CD4-positive, alpha-beta memory T cell (primary cell): ENCODE measurements at regions of chr11 and their contacts with region 1.

Region 1: DNA sequence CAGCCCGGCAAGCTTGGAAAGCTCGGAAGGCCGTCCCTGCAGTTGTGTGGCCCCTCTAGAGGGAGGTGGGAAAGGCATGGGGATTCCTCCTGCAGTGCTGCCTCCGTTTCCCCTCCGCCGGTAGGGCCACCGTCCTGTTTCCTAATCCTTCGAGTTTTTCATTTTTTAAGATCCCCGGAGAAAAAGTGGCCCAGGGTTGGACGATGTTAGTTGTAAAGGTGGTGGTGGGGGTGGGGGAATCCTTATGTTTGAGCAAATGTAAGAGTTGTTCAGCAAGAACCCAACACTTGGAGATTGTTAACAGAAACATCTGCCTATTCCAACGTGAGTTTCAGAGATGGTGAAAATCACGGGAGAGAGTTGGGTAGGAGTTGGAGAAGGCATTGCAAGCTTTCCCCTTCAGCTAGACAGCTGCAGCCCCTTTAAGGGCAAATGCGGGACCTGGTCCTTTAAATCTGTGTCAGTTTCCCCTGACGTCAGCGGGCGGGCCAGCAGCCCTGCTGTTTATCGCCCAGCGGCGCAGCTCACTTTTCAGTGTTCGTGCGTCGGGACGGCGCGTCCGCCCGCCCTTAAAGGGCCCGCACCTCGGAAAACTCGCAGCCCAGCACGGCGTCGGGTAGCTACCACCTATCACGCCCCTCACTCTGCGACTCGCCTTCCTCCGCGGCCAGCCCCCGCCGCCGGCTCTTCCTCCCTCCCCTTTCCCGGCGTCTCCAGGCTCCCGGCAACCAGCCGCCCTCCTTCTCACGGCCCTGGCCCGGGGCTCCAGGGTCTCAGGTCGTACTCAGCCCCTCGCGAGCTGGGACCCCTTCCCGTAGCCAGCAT is at the start of gene SIDT2:
- DNase-seq: peak; percentile 85 to 90 (median 86)
- H3K4me3 ChIP-seq: peak within 1 kb of the TSS; percentile 76 to 80
- H3K4me3 Mint-ChIP-seq: peak within 1 kb of the TSS; percentile 94 to 99 (median 94)
- H3K27ac ChIP-seq: peak within 1 kb of the TSS; percentile 73
- H3K27ac Mint-ChIP-seq: peak within 1 kb of the TSS; percentile 93 to 98 (median 97)
- H3K4me1 ChIP-seq: peaks cover 30% of the 10 kb centered on the region
- H3K4me1 Mint-ChIP-seq: peaks cover 21 to 45% (median 34%) of the 10 kb centered on the region in 4 donors
- H3K27me3 ChIP-seq: no peaks in the 10 kb centered on the region
- H3K27me3 Mint-ChIP-seq: no peaks in the 10 kb centered on the region
- total RNA-seq, gene SIDT2: 60.2 to 67.3 TPM

Region 2: GRCh38 chr11:116853461-116854073 is 324.9 kb before region 1 on chr11:
- CTCF ChIA-PET with region 1: no interaction called
- POLR2A ChIA-PET with region 1: interaction called, 12 read pairs
- intact Hi-C with region 1: no loop called
- DNase-seq: peak; percentile 81 to 91 (median 85)
- H3K4me3 ChIP-seq: peak overlapping the region; percentile 8 to 38
- H3K4me3 Mint-ChIP-seq: peak overlapping the region; percentile 53 to 90 (median 77)
- H3K27ac ChIP-seq: peak overlapping the region; percentile 52
- H3K27ac Mint-ChIP-seq: peak overlapping the region; percentile 83 to 98 (median 95)
- H3K4me1 ChIP-seq: peaks cover 81% of the 10 kb centered on the region
- H3K4me1 Mint-ChIP-seq: peaks cover 67 to 84% (median 74%) of the 10 kb centered on the region in 4 donors
- H3K27me3 ChIP-seq: no peaks in the 10 kb centered on the region
- H3K27me3 Mint-ChIP-seq: no peaks in the 10 kb centered on the region

Region 3: GRCh38 chr11:117127171-117127901 is 51.1 kb before region 1 on chr11:
- CTCF ChIA-PET with region 1: no interaction called
- POLR2A ChIA-PET with region 1: no interaction called
- intact Hi-C with region 1: no loop called
- DNase-seq: no peak
- H3K4me3 ChIP-seq: no peak overlapping the region
- H3K4me3 Mint-ChIP-seq: no peak overlapping the region
- H3K27ac ChIP-seq: no peak overlapping the region
- H3K27ac Mint-ChIP-seq: no peak overlapping the region
- H3K4me1 ChIP-seq: no peaks in the 10 kb centered on the region
- H3K4me1 Mint-ChIP-seq: no peaks in the 10 kb centered on the region
- H3K27me3 ChIP-seq: no peaks in the 10 kb centered on the region
- H3K27me3 Mint-ChIP-seq: peaks cover 0 to 2% of the 10 kb centered on the region in 2 donors

Region 4: DNA sequence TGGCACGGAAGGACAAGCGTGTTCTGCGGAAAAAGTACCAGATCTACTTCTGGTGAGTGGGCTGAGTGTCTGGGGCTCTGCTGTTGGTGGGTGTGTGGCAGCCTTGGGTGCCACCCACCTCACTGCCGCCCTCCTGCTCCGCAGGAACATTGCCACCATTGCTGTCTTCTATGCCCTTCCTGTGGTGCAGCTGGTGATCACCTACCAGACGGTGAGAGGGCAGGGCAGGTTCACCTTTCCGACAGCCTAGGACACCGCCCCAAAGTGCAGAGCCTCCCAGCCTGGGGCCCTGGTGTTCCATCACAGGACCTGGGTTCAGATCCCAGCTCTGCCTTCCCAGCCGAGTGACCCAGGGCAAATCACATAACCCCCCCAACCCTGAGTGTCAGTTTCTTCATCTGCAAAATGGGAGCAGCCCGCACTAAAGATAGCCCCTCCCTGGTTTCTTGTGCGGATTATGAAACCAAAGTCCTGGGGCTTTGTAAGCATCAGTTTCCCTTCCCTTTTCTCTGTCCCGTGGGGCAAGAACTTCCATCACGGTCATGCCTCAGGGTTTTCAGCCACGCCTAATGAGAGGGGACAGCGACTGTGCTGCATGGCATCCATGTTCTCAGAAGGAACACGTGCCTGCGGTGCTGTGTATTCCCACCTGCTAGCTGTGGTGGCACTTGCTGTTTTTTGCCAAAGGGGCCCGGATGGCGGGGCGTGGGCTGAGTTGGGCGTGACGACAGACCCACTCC is 10.9 kb after region 1 on chr11:
- CTCF ChIA-PET with region 1: interaction called, 4 read pairs
- POLR2A ChIA-PET with region 1: interaction called, 20 read pairs
- intact Hi-C with region 1: no loop called
- DNase-seq: no peak
- H3K4me3 ChIP-seq: no peak overlapping the region
- H3K4me3 Mint-ChIP-seq: no peak overlapping the region
- H3K27ac ChIP-seq: no peak overlapping the region
- H3K27ac Mint-ChIP-seq: no peak overlapping the region
- H3K4me1 ChIP-seq: no peaks in the 10 kb centered on the region
- H3K4me1 Mint-ChIP-seq: peaks cover 0 to 15% (median 5%) of the 10 kb centered on the region in 4 donors
- H3K27me3 ChIP-seq: no peaks in the 10 kb centered on the region
- H3K27me3 Mint-ChIP-seq: no peaks in the 10 kb centered on the region

Region 5: DNA sequence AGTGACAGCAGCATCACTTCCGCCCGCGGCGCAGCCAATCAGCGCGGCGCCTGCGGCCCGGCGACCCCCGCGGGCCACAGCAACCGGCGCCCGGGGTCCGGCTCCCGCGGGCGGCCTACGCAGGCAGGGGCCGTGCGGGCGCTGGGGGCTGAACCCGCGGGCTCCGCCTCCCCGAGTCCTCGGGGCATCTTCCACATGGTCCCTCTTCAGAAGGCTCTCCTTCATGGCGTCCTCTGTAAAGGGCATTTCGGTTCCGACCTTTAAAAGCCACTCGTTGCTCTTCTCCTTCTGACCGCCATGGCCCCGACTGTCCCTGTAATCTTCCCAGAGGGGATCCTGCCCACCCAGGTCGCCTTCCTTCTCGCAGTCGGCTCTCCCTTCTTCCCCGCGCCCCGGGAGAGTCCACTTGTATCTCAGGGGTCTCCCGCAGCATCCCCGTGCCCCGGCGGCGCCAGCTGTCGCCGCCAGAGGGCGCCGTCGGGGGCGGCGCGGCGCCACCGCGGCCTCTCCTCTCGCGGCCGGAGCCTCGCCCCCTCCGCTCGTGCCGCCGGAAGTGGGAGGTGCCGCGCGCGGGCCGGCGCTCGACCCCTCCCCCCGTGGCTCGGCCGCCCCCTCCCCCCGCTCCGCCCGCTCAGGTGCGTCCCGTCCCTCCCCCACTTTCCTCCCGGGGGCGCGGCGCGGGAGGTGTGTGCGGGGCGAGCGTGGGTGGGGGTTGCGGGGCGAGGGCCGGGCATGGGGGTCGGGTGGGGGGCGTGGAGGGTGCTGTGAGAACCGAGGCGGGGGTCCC is 53.9 kb after region 1 on chr11 and contains the start of gene RNF214:
- CTCF ChIA-PET with region 1: interaction called, 48 read pairs
- POLR2A ChIA-PET with region 1: interaction called, 52 read pairs
- intact Hi-C with region 1: loop called (anchors 1 kb)
- DNase-seq: peak; percentile 65 to 83 (median 75)
- H3K4me3 ChIP-seq: peak within 1 kb of the TSS; percentile 87 to 93
- H3K4me3 Mint-ChIP-seq: peak within 1 kb of the TSS; percentile 97 to 100 (median 99)
- H3K27ac ChIP-seq: peak within 1 kb of the TSS; percentile 90
- H3K27ac Mint-ChIP-seq: peak within 1 kb of the TSS; percentile 95 to 100 (median 99)
- H3K4me1 ChIP-seq: peaks cover 47% of the 10 kb centered on the region
- H3K4me1 Mint-ChIP-seq: peaks cover 27 to 62% (median 49%) of the 10 kb centered on the region in 4 donors
- H3K27me3 ChIP-seq: no peaks in the 10 kb centered on the region
- H3K27me3 Mint-ChIP-seq: no peaks in the 10 kb centered on the region
- total RNA-seq, gene RNF214: 41.8 to 50.1 TPM

Region 6: DNA sequence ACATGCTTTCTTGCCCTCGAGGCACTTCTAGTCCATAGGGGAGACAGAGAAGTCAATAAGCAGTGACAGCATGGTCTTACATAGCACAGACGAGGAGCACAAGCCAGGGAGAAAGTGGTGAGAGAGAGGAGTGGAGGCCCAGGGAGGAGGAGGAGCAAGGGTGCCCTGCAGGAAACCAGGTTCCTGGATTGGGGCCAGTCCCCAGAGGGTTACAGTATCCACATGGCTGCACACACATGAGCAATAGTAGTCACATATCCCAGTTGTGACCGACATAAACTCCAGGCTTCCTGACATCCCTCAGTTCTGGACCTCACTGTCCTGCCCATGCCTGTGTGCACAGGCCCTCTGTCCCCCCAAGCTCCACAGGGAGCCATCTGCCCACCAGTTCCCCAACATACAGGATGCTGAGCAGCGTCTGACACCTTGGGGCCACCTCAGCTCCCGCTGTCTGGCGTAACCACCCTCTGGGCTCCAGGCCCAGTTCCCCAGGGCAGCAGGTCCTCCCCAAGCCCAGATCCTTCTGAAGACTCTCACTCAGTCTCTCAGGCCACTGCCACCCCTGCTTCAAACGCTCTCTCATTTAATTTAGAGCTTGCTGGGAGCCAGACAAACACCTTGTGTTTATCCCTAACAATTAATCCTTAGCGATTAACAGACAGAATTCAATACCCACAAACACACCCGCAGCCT is 564.8 kb after region 1 on chr11:
- CTCF ChIA-PET with region 1: no interaction called
- POLR2A ChIA-PET with region 1: no interaction called
- intact Hi-C with region 1: no loop called
- DNase-seq: no peak
- H3K4me3 ChIP-seq: no peak overlapping the region
- H3K4me3 Mint-ChIP-seq: no peak overlapping the region
- H3K27ac ChIP-seq: no peak overlapping the region
- H3K27ac Mint-ChIP-seq: no peak overlapping the region
- H3K4me1 ChIP-seq: no peaks in the 10 kb centered on the region
- H3K4me1 Mint-ChIP-seq: no peaks in the 10 kb centered on the region
- H3K27me3 ChIP-seq: peaks cover 3% of the 10 kb centered on the region
- H3K27me3 Mint-ChIP-seq: peaks cover 24% of the 10 kb centered on the region in 2 donors